HEK293T (cell line): ENCODE measurements at regions of chr22 and their contacts with region 1.

Region 1: GRCh38 chr22:17830043-17830961 is 56.0 kb upstream of the BID start:
- DNase-seq: peak; percentile 95

Region 2: DNA sequence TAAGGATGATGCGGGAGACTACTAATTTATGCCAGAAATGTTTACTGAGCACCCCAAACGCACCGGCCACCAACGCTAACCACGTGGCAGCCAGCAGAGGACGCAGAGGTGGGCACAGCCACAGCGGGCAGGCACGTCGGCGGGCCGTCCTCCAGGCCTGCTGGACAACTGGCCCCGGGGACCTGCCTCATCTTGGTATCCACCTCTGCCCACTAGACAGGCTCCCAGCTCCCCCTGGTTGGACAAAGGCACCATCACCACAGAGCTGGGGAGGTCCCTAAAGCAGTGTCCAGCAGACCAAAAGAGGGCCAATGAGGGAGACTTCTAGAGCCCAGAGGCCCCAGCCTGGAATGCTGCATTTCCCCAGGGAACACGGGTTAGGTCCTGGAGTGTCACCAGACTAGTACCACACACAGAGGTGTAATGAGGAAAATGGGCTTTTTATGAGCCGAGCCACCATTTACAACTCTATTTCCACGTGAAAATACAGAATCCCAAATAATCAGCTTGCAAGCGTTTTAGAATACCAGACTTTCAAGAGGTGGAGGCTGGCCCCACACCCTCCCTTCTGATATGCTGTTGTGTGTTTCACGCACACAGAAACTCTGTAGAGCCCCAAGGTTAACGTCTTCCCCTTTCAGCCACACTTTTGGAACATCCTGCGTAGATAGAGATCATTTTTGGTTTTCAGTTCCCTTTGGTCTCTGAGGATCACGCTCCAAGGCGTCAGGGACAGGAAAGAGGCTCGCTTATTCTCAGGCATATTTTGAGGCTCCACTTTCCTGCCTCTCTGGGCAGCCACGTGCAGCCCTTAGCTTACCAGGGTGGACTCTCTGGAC is 32.4 kb before region 1 on chr22:
- CTCF ChIA-PET with region 1: no interaction called
- POLR2A ChIA-PET with region 1: no interaction called
- DNase-seq: no peak

Region 3: GRCh38 chr22:17818180-17818579 is 12.1 kb before region 1 on chr22:
- CTCF ChIA-PET with region 1: no interaction called
- POLR2A ChIA-PET with region 1: no interaction called
- DNase-seq: no peak

Region 4: GRCh38 chr22:17891481-17892167 is 61.3 kb after region 1 on chr22:
- CTCF ChIA-PET with region 1: interaction called, 10 read pairs
- POLR2A ChIA-PET with region 1: no interaction called
- DNase-seq: peak; percentile 48

Region 5: GRCh38 chr22:17920145-17920605 is 89.9 kb after region 1 on chr22:
- CTCF ChIA-PET with region 1: no interaction called
- POLR2A ChIA-PET with region 1: no interaction called
- DNase-seq: peak; percentile 38